ENCODE measurements at regions of chr2 and their contacts with region 1.

Region 1: GRCh38 chr2:237085248-237086221 is at the start of gene COPS8:
- DNase-seq: peak; percentile 94
- ATAC-seq: peak; percentile 99
- H3K4me3 ChIP-seq: peak within 1 kb of the TSS; percentile 98
- H3K27ac ChIP-seq: peak within 1 kb of the TSS; percentile 67
- H3K4me1 ChIP-seq: peaks cover 21% of the 10 kb centered on the region
- H3K27me3 ChIP-seq: no peaks in the 10 kb centered on the region
- CTCF ChIP-seq: peak; percentile 40; the same call in 1 of the 2 replicates
- total RNA-seq, gene COPS8: 109 and 111 TPM in 2 replicates

Region 2: DNA sequence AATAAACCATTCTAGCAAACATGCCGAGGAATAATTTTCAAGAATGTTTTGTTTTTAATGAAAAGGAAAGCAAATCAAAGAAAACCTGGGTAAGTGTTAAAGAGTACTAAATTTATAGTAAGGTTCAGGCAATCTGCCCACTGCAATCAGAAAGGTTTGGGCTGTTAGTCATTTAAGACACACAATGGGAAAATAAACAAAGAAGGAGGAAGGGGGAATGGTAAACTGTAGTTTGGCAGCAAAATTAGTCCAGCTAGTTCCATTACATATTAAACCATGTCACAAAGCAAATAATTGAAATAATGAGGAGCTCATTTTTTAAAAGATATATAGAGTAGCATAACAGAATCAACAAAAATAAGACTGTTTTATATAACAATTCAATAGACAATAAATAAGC is 87.3 kb before region 1 on chr2:
- CTCF ChIA-PET with region 1: no interaction called
- POLR2A ChIA-PET with region 1: no interaction called
- intact Hi-C with region 1: no loop called
- DNase-seq: peak; percentile 82
- ATAC-seq: peak; percentile 82
- H3K4me3 ChIP-seq: peak overlapping the region; percentile 54
- H3K27ac ChIP-seq: peak overlapping the region; percentile 95
- H3K4me1 ChIP-seq: peaks cover 40% of the 10 kb centered on the region
- H3K27me3 ChIP-seq: no peaks in the 10 kb centered on the region
- CTCF ChIP-seq: no peak

Region 3: DNA sequence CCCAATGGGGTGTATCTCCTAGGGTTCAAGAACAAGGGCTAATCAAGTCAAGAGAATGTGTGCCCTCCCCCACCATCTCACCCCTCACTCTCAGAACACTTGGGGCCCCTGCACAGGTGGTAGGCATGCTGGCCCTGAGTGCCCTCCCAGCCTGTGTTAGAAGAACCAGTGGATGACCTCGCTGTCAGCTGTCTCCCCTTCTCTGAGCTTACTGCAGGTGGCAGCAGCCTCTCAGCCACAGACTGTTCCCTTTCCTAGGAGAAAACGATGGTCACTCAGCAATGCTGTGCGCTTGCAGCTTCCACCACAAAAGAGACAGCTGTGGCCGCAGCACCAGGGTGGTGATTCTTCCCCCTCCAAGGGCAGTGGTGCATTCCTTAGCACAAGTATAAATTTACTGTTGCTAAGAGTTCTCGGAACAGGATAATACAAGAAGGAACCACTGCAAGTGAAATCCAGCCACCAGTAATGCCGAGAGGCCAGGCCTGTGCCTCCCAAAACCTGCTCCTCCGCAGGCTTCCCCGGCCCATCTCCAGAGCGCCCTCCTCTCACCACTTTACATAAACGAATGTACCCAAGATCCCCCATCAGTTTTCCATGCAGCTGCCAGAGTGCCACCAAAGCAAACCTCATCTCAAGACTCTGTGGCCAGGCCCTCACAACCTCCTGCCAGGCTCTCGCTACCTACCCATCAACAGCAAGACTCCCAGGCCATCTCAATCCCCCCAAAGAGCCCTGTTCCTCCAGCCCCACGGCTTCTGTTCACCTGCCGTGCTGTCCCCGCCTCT is 773.0 kb after region 1 on chr2:
- CTCF ChIA-PET with region 1: no interaction called
- POLR2A ChIA-PET with region 1: no interaction called
- intact Hi-C with region 1: no loop called
- DNase-seq: peak; percentile 84
- ATAC-seq: peak; percentile 53
- H3K4me3 ChIP-seq: peak overlapping the region; percentile 76
- H3K27ac ChIP-seq: peak overlapping the region; percentile 47
- H3K4me1 ChIP-seq: peaks cover 54% of the 10 kb centered on the region
- H3K27me3 ChIP-seq: no peaks in the 10 kb centered on the region
- CTCF ChIP-seq: peak; percentile 88

Region 4: GRCh38 chr2:238176613-238177012 is 1091.1 kb after region 1 on chr2:
- CTCF ChIA-PET with region 1: interaction called, 11 read pairs
- POLR2A ChIA-PET with region 1: no interaction called
- intact Hi-C with region 1: no loop called
- DNase-seq: no peak
- ATAC-seq: no peak
- H3K4me3 ChIP-seq: no peak overlapping the region
- H3K27ac ChIP-seq: no peak overlapping the region
- H3K4me1 ChIP-seq: no peaks in the 10 kb centered on the region
- H3K27me3 ChIP-seq: no peaks in the 10 kb centered on the region
- CTCF ChIP-seq: no peak

Measured in PC-3 (cell line).